Breast epithelium (tissue), 4 donors: ENCODE measurements at regions of chr15 and their contacts with region 1.

Region 1: DNA sequence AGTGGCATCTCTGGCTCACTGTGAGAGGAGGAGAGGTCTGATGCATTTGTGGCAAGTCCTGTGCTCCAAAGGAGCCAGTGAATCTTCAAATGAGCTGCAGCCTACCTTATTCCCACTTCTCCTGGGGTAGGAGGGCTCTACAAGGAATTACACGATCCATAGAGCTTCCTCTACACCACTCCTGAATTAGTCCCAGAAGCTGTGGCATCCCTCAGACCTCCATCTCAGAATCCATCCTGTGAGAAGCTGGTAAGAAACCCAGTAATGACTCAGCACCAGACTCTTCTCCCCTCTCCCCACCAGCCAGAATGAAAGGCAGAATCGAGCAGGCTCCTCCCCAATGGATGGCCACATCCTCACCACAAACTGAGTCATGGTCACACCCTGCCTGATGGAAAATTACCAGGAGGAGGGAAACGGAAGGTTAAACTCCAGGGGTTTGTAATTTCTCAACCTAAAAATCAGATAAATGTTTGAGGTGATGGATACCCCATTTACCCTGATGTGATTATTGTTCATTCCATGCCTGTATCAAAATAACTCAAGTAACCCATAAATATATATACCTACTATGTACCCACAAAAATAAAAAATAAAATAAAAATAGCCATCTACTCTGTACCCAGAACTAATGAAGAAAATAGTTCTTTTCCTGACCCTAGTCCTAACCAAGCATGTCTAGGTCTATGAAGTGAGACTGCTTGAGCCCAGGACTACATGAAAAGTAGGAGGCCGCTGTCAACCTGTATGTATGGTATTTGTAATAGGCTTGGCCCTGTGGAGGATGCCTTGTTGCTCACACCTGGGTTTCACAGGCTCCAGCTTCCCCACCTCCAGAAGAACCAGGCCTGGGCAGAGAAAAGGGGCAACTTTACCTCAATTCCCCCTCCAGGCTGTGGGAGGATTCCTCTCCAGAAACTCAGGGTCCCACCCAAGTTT is 6.6 kb upstream of the PKM start:
- DNase-seq: peak in 1 of 2 donors; percentile 71
- H3K4me3 ChIP-seq: peak overlapping the region in 2 of 3 donors; percentile 25 to 52
- H3K27ac ChIP-seq: peak overlapping the region; percentile 80 to 88
- H3K4me1 ChIP-seq: peaks cover 3 to 4% of the 10 kb centered on the region in 2 donors
- H3K27me3 ChIP-seq: no peaks in the 10 kb centered on the region
- CTCF ChIP-seq: no peak
- POLR2A ChIP-seq: no peak

Region 2: GRCh38 chr15:71634820-71635560 is 602.6 kb before region 1 on chr15:
- intact Hi-C with region 1: loop called (anchors 5 kb)
- DNase-seq: no peak
- H3K4me3 ChIP-seq: no peak overlapping the region
- H3K27ac ChIP-seq: no peak overlapping the region
- H3K4me1 ChIP-seq: no peaks in the 10 kb centered on the region
- H3K27me3 ChIP-seq: no peaks in the 10 kb centered on the region
- CTCF ChIP-seq: no peak
- POLR2A ChIP-seq: no peak

Region 3: GRCh38 chr15:72168111-72168808 is 69.3 kb before region 1 on chr15:
- intact Hi-C with region 1: no loop called
- DNase-seq: peak in 1 of 2 donors; percentile 76
- H3K4me3 ChIP-seq: peak overlapping the region in 2 of 3 donors; percentile 20 to 56
- H3K27ac ChIP-seq: peak overlapping the region; percentile 89 to 95
- H3K4me1 ChIP-seq: peaks cover 4% of the 10 kb centered on the region in 2 donors
- H3K27me3 ChIP-seq: no peaks in the 10 kb centered on the region
- CTCF ChIP-seq: no peak
- POLR2A ChIP-seq: no peak

Region 4: DNA sequence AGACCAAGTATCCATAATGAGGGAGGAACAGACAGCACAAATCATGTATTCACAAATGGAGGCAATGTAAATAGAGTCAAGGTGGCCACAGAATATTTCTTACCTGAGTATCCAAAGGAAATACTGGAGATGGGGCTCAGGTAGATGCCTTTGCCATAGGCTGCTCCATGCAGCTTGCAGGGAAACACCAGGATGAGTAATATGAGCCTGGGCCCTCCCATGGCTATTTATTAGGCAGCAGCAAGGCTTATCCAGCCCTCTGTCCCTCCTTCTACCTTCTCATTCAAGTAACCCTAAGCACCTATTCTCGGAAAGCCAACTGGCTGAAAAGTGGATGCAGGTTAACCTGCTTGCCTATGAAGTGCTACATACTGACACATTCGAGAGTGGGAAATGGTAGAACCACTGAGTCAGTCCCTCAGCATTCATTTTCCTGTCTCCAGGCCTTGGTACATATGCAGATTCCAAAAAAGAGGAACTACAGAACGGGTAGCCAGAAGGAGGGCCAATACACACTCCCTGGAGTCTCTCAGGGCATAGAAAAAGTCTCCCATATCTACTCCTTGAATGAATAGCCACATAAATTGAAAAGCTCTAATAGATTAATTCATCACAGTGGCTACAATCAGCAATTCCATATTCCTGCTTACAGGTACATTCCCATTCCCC is 11.7 kb after region 1 on chr15:
- intact Hi-C with region 1: no loop called
- DNase-seq: no peak
- H3K4me3 ChIP-seq: no peak overlapping the region
- H3K27ac ChIP-seq: no peak overlapping the region
- H3K4me1 ChIP-seq: no peaks in the 10 kb centered on the region
- H3K27me3 ChIP-seq: no peaks in the 10 kb centered on the region
- CTCF ChIP-seq: no peak
- POLR2A ChIP-seq: no peak

Region 5: GRCh38 chr15:72358650-72359288 is 121.2 kb after region 1 on chr15:
- intact Hi-C with region 1: no loop called
- DNase-seq: peak; percentile 86 to 88
- H3K4me3 ChIP-seq: peak overlapping the region in 1 of 3 donors; percentile 30
- H3K27ac ChIP-seq: peak overlapping the region; percentile 82 to 91
- H3K4me1 ChIP-seq: peaks cover 4 to 6% of the 10 kb centered on the region in 2 donors
- H3K27me3 ChIP-seq: no peaks in the 10 kb centered on the region
- CTCF ChIP-seq: no peak
- POLR2A ChIP-seq: no peak